Left lung (tissue), 14 donors: ENCODE measurements at regions of chr6 and their contacts with region 1.

Region 1: DNA sequence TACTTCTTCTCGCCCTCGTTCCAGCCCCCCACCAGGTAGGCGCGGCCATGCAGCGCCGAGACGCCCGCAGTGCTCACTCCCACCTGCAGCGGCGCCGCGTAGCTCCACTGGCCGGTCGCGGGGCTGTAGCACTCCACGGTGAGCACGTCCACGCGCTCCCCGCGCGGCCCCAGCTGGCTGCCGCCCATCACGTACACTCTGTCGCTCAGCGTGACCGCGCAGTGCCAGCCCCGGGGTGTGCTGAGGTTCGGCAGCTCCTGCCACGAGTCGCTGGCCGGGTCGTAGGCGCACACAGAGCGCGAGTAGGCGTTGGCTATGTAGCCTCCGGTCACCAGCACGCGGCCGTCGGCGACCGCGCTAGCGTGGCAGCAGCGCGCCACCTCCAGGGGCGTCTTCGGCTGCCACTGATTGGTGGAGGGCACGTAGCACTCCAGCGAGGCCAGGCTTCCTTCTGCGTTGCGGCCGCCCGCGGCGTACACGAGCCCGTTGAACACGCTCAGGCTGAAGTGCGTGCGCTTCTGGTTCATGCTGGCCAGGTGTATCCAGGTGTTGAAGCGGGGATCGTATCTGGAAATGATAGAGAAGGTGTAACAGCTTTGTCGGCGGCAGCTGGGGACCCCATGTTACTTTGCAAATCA is 13.7 kb downstream of the KLHL31 start:
- DNase-seq: peak; percentile 65 to 94 (median 82)
- ATAC-seq: peak; percentile 97
- H3K4me3 ChIP-seq: peak overlapping the region; percentile 50 to 52
- H3K27ac ChIP-seq: peak overlapping the region in 1 of 2 donors; percentile 59
- H3K4me1 ChIP-seq: peaks cover 6 to 21% of the 10 kb centered on the region in 2 donors
- H3K27me3 ChIP-seq: peaks cover 0 to 50% of the 10 kb centered on the region in 2 donors
- CTCF ChIP-seq: peak in 1 of 2 donors; percentile 41

Region 2: GRCh38 chr6:53544470-53545308 is 107.2 kb before region 1 on chr6 and contains the start of gene GCLC:
- intact Hi-C with region 1: loop called in 1 of 2 experiments (anchors 10 kb)
- DNase-seq: peak; percentile 91 to 96 (median 94)
- ATAC-seq: peak; percentile 76
- H3K4me3 ChIP-seq: peak within 1 kb of the TSS; percentile 73 to 74
- H3K27ac ChIP-seq: peak within 1 kb of the TSS; percentile 87 to 91
- H3K4me1 ChIP-seq: peaks cover 0 to 39% of the 10 kb centered on the region in 2 donors
- H3K27me3 ChIP-seq: peaks cover 0 to 21% of the 10 kb centered on the region in 2 donors
- CTCF ChIP-seq: peak; percentile 61 to 67
- polyA plus RNA-seq, gene GCLC: 30.7 to 41.5 (median 37.7) TPM

Region 3: DNA sequence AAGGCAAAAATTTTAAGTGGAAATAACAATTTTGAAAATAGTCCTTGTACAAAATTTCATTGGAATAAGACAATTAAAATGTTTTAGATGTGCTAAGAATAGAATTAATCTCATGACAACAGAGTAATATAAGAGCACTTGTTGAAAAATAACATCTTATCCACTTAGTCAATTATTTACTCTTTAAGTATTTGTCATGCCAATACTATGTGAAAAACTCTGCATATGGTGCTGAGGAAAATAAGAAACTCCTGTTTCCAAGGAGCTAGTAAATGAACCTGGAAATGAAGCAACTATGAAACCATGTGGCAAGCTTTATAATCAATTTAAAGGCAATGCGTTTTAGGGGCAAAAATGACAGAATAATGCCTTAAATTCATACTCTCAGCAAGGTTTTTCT is 1479.7 kb after region 1 on chr6:
- intact Hi-C with region 1: no loop called
- DNase-seq: no peak
- ATAC-seq: peak; percentile 66
- H3K4me3 ChIP-seq: no peak overlapping the region
- H3K27ac ChIP-seq: no peak overlapping the region
- H3K4me1 ChIP-seq: no peaks in the 10 kb centered on the region
- H3K27me3 ChIP-seq: no peaks in the 10 kb centered on the region
- CTCF ChIP-seq: no peak